CD8-positive, alpha-beta T cell (primary cell): ENCODE measurements at regions of chr10 and their contacts with region 1.

Region 1: DNA sequence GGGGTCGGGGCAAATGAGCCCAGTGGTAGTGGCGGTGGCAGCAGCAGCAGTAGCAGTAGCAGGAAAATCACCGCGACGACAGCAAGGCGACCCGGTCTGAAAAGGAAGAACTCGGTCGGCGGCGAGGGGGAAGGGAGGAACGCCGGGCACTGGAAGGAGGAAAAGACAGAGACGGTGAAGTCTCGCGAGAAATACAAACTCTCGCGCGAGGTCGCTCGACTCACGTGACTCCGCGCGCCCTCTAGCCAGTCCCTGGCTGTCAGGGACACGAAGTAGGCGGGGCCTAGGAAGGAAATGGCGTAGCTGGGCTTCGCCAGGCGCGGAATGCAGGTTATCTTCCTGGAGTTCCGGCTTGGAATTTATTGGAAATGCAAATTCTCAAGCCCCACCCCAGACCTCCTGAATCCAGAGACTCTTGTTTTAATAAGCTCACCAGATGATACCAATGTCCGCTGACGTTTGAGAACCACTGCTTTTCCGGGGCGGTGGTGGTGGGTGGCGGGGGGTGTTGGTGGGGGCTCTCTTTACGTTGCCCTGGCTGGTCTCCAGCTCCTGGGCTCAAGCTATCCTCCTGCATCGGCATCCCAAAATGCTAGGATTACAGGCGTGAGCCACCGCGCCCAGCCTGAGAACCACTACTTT is at the start of gene SMNDC1:
- DNase-seq: peak; percentile 94 to 98 (median 97)
- ATAC-seq: peak; percentile 88
- H3K4me3 ChIP-seq: peak within 1 kb of the TSS; percentile 72 to 85
- H3K4me3 Mint-ChIP-seq: peak within 1 kb of the TSS; percentile 98
- H3K27ac ChIP-seq: peak within 1 kb of the TSS; percentile 89 to 95
- H3K27ac Mint-ChIP-seq: peak within 1 kb of the TSS; percentile 100
- H3K4me1 ChIP-seq: peaks cover 45% of the 10 kb centered on the region
- H3K4me1 Mint-ChIP-seq: peaks cover 55% of the 10 kb centered on the region
- H3K27me3 ChIP-seq: no peaks in the 10 kb centered on the region
- H3K27me3 Mint-ChIP-seq: no peaks in the 10 kb centered on the region
- CTCF ChIP-seq: no peak
- total RNA-seq, gene SMNDC1: 43.3 to 44.8 TPM

Region 2: GRCh38 chr10:109914966-109915365 is 389.9 kb before region 1 on chr10:
- CTCF ChIA-PET with region 1: no interaction called
- POLR2A ChIA-PET with region 1: no interaction called
- intact Hi-C with region 1: loop called in 1 of 2 experiments (anchors 10 kb)
- DNase-seq: peak in 7 of 9 experiments; percentile 25 to 86 (median 55)
- ATAC-seq: peak; percentile 88
- H3K4me3 ChIP-seq: no peak overlapping the region
- H3K4me3 Mint-ChIP-seq: peak overlapping the region; percentile 62
- H3K27ac ChIP-seq: peak overlapping the region in 1 of 2 experiments; percentile 74
- H3K27ac Mint-ChIP-seq: peak overlapping the region; percentile 55
- H3K4me1 ChIP-seq: peaks cover 40% of the 10 kb centered on the region
- H3K4me1 Mint-ChIP-seq: peaks cover 83% of the 10 kb centered on the region
- H3K27me3 ChIP-seq: no peaks in the 10 kb centered on the region
- H3K27me3 Mint-ChIP-seq: no peaks in the 10 kb centered on the region
- CTCF ChIP-seq: no peak

Region 3: DNA sequence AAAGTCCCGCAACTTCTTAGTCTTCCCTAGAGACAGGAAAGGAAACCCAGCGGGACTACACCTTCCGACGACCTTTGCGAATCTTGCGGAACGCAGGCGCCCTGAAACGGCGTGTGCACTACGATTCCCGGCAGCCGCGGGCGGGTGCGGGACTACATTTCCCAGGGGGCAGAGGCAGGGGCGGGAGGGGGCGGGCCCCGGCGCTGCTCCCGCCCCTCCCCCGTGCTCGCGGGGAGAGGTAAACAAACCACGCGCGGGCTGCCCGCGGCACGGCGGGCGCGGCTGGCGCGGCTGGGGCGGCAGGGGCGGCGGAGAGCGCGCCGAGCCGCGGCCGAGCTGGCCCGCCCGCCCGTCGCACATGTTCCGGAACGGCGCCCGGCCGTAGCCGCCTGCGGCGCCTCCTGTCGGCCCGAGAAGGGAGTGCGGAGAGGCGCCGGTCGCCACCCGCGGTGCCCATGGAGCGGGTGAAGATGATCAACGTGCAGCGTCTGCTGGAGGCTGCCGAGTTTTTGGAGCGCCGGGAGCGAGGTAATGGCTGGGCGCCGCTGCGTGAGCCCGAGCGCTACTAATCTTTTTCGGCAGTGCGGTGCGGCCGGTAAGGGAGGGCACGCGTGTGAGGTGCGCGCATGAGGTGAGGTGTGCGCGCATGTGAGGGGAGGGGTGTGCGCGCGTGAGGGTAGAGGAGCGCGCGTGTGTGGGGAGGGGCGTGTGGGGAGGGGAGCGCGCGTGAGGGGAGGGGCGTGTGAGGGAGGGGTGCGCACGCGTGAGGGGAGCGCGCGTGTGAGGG is 79.0 kb before region 1 on chr10:
- CTCF ChIA-PET with region 1: interaction called, 3 read pairs
- POLR2A ChIA-PET with region 1: interaction called, 3 read pairs
- intact Hi-C with region 1: loop called (anchors 1 to 2 kb)
- DNase-seq: peak; percentile 79 to 95 (median 88)
- ATAC-seq: peak; percentile 54
- H3K4me3 ChIP-seq: peak overlapping the region; percentile 88 to 91
- H3K4me3 Mint-ChIP-seq: peak overlapping the region; percentile 95
- H3K27ac ChIP-seq: peak overlapping the region; percentile 78 to 79
- H3K27ac Mint-ChIP-seq: peak overlapping the region; percentile 94
- H3K4me1 ChIP-seq: peaks cover 22% of the 10 kb centered on the region
- H3K4me1 Mint-ChIP-seq: peaks cover 34% of the 10 kb centered on the region
- H3K27me3 ChIP-seq: peaks cover 0 to 2% of the 10 kb centered on the region in 2 experiments
- H3K27me3 Mint-ChIP-seq: peaks cover 9% of the 10 kb centered on the region
- CTCF ChIP-seq: peak; percentile 50

Region 4: DNA sequence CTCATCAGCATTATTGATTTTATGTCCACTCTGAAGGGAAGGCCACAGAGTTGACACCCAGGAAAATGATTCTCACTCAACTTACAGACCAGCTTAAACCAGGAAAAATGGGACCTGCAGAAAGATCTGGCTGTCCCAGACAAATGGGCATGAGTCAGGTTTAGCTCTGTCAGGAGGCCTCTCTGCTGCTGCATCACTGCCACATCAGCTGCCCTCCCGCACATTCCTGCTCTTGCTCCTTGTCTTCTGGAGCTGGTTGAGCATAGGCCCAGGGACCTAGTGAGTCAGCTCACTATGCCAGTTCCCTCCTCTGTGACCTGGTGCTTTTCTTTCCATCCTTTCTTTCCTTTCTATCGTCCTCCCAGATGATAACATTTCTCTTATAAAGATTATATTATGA is 18.6 kb after region 1 on chr10:
- CTCF ChIA-PET with region 1: no interaction called
- POLR2A ChIA-PET with region 1: no interaction called
- intact Hi-C with region 1: no loop called
- DNase-seq: no peak
- ATAC-seq: no peak
- H3K4me3 ChIP-seq: no peak overlapping the region
- H3K4me3 Mint-ChIP-seq: no peak overlapping the region
- H3K27ac ChIP-seq: no peak overlapping the region
- H3K27ac Mint-ChIP-seq: no peak overlapping the region
- H3K4me1 ChIP-seq: no peaks in the 10 kb centered on the region
- H3K4me1 Mint-ChIP-seq: no peaks in the 10 kb centered on the region
- H3K27me3 ChIP-seq: no peaks in the 10 kb centered on the region
- H3K27me3 Mint-ChIP-seq: peaks cover 6% of the 10 kb centered on the region
- CTCF ChIP-seq: no peak

Region 5: DNA sequence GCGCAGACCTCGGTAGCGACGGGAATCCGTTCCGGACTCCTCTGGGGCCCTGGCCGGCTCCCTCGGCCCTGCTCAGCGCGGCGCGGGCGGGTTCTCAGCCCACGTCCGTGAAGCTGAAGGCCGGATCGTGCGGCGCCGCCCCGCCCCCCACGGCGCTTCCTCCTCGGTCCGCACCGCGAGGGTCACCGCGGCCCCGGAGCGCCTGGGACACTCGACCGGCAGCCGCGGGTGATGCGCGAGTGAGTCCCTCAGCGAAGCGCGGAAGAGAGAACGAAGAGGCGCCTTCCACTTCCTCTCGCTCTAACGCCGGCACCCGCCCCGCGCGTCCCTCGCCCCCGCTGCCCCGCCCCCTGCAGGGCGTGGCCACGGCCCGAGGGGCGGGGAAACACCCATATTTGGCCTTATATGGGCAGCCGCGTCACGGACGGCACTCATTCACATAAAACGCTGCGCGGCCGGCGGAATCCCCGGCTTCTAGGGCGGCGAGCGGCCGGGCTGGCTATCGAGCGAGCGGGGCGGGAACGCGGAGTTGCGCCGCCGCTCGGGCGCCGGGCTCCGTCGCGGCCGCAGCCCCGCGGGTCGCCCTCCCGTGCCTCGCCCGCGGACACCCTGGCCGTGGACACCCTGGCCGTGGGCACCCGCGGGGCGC is 192.7 kb after region 1 on chr10 and contains the start of gene DUSP5:
- CTCF ChIA-PET with region 1: interaction called, 3 read pairs
- POLR2A ChIA-PET with region 1: interaction called, 7 read pairs
- intact Hi-C with region 1: loop called (anchors 1 kb)
- DNase-seq: peak; percentile 89 to 98 (median 94)
- ATAC-seq: peak; percentile 92
- H3K4me3 ChIP-seq: peak within 1 kb of the TSS; percentile 67 to 91
- H3K4me3 Mint-ChIP-seq: peak within 1 kb of the TSS; percentile 91
- H3K27ac ChIP-seq: peak within 1 kb of the TSS; percentile 50 to 63
- H3K27ac Mint-ChIP-seq: peak within 1 kb of the TSS; percentile 91
- H3K4me1 ChIP-seq: peaks cover 41% of the 10 kb centered on the region
- H3K4me1 Mint-ChIP-seq: peaks cover 50% of the 10 kb centered on the region
- H3K27me3 ChIP-seq: no peaks in the 10 kb centered on the region
- H3K27me3 Mint-ChIP-seq: no peaks in the 10 kb centered on the region
- CTCF ChIP-seq: no peak
- total RNA-seq, gene DUSP5: 69.8 TPM

Region 6: GRCh38 chr10:110600487-110601101 is 295.7 kb after region 1 on chr10:
- CTCF ChIA-PET with region 1: interaction called, 3 read pairs
- POLR2A ChIA-PET with region 1: no interaction called
- intact Hi-C with region 1: loop called (anchors 1 kb)
- DNase-seq: peak in 3 of 9 experiments; percentile 13 to 69 (median 59)
- ATAC-seq: peak; percentile 73
- H3K4me3 ChIP-seq: no peak overlapping the region
- H3K4me3 Mint-ChIP-seq: no peak overlapping the region
- H3K27ac ChIP-seq: no peak overlapping the region
- H3K27ac Mint-ChIP-seq: no peak overlapping the region
- H3K4me1 ChIP-seq: no peaks in the 10 kb centered on the region
- H3K4me1 Mint-ChIP-seq: no peaks in the 10 kb centered on the region
- H3K27me3 ChIP-seq: no peaks in the 10 kb centered on the region
- H3K27me3 Mint-ChIP-seq: no peaks in the 10 kb centered on the region
- CTCF ChIP-seq: peak; percentile 47

Region 7: DNA sequence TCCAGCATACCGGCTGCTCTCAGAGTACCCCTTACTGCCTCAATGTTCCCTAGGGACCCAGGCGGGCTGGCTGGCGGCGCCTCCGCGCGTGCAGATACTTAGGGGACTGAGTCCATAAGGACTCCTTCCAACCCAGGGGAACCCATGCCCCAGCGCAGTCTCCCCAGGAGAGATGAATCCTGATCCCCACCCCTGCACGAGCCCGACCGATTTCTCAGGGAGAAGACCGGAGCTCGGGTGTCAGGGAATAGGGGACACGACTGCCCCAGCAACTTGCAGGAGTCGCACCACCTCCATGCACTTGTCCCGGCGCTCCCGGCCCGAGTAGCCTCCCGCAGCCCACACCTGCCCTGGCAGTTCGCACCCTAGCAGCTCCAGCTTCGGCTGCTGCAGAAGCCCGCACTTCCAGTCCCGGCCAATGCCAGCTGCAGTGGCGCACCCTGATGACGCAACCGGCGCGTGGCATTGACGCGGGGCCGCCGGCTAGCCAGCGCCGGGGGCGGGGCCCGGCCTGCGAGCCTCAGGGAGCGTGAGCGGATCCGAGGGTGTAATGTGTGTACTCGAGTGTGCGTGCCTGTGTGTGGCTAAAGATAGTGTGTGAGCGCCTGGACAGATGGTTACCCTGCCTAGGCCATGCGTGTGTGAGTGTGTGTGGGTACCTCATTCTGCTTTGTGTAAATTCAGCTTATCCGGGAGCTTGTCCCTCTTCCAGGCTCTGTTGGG is 1878.6 kb after region 1 on chr10 and contains the start of gene GPAM:
- CTCF ChIA-PET with region 1: no interaction called
- POLR2A ChIA-PET with region 1: no interaction called
- intact Hi-C with region 1: loop called in 1 of 2 experiments (anchors 10 kb)
- DNase-seq: peak; percentile 95 to 100 (median 99)
- ATAC-seq: peak; percentile 98
- H3K4me3 ChIP-seq: peak within 1 kb of the TSS; percentile 65 to 92
- H3K4me3 Mint-ChIP-seq: peak within 1 kb of the TSS; percentile 87
- H3K27ac ChIP-seq: peak within 1 kb of the TSS; percentile 76 to 78
- H3K27ac Mint-ChIP-seq: peak within 1 kb of the TSS; percentile 93
- H3K4me1 ChIP-seq: peaks cover 17% of the 10 kb centered on the region
- H3K4me1 Mint-ChIP-seq: peaks cover 28% of the 10 kb centered on the region
- H3K27me3 ChIP-seq: no peaks in the 10 kb centered on the region
- H3K27me3 Mint-ChIP-seq: no peaks in the 10 kb centered on the region
- CTCF ChIP-seq: no peak
- total RNA-seq, gene GPAM: 3.2 to 4.2 TPM